AG04450 (cell line): ENCODE measurements at regions of chr9 and their contacts with region 1.

Region 1: GRCh38 chr9:36450110-36450732 is 50.2 kb upstream of the RNF38 start:
- DNase-seq: peak; percentile 18
- H3K4me3 ChIP-seq: no peak overlapping the region
- H3K27ac ChIP-seq: no peak overlapping the region
- H3K27me3 ChIP-seq: no peaks in the 10 kb centered on the region
- CTCF ChIP-seq: peak; percentile 78

Region 2: DNA sequence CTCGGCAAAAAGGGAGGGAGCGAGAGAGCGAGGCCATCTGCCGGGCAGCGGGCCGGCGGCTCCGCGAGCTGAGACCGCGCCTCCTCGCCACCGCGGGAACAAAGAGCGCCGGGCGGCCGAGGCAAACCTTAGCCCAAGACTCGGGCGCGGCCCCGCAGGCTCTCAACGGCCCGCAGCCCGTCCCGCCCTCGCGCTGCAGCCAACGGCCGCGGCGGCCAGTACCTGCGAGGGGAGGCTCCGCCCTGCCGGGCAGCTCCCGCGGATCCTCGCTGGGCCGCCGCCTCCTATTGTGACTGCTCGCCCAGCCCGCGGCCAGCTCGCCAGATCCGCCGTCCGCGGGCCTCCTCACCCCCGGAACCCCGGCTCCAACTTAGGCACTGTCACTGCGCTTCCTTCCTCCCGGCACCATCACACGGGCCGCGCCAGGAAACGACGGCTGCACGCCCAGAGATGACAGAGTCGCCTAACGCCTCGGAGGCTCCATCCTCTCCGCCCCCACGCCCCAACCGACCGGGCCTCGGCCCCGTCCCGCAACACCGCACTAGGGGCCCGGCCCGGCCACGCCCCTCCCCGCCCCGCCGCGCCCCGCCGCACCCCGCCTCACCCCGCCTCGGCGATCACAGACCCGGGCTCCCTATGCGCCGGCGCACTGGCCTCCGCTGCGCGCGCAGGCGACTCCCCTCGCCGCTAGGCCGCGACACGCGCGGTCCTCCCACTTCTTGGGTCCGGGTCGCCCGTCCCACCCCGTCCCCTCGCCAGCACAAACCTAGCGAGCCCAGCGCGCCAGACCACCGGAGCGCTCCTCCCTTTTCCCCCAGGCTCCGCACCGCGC is 49.7 kb before region 1 on chr9:
- CTCF ChIA-PET with region 1: interaction called, 189 read pairs
- POLR2A ChIA-PET with region 1: no interaction called
- DNase-seq: no peak
- H3K4me3 ChIP-seq: peak overlapping the region; percentile 79
- H3K27ac ChIP-seq: peak overlapping the region; percentile 75
- H3K27me3 ChIP-seq: no peaks in the 10 kb centered on the region
- CTCF ChIP-seq: no peak

Region 3: GRCh38 chr9:36436909-36437308 is 13.3 kb before region 1 on chr9:
- CTCF ChIA-PET with region 1: interaction called, 73 read pairs
- POLR2A ChIA-PET with region 1: no interaction called
- DNase-seq: no peak
- H3K4me3 ChIP-seq: no peak overlapping the region
- H3K27ac ChIP-seq: no peak overlapping the region
- H3K27me3 ChIP-seq: no peaks in the 10 kb centered on the region
- CTCF ChIP-seq: no peak

Region 4: DNA sequence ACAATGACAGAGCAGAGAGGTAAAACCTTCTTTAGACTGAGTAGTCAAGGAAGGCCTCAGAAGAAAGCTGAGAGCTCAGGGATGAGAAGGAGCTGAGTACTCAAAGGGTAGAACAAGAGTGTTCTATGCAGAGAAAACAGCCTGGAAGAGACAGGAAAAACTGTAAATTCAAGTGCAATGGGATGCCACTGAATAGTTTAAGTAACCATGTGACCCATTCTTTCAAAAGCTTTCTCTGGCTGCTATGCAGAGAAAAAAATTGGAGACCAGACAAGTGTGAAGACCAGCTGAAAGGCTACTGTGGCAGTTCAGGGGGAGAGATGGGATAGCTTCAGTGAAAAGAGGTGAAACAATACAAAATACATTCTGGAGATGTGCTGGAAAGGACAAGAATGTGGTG is 11.1 kb after region 1 on chr9:
- CTCF ChIA-PET with region 1: interaction called, 54 read pairs
- POLR2A ChIA-PET with region 1: no interaction called
- DNase-seq: peak; percentile 6
- H3K4me3 ChIP-seq: no peak overlapping the region
- H3K27ac ChIP-seq: no peak overlapping the region
- H3K27me3 ChIP-seq: no peaks in the 10 kb centered on the region
- CTCF ChIP-seq: no peak

Region 5: DNA sequence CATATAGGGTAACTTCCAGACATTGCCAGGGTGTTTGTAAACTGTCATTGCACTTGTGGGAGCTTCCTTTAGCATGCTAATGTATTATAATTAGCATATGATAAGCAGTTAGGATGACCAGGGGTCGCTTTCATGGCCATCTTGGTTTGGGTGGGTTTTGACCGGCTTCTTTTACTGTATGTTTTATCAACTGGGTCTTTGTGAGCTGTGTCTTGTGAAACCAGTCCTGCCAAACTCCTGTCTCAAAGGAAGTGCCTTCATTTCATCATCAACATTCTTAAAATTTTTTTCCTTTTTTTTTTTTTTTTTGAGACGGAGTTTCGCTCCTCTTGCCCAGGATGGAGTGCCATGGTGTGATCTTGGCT is 110.6 kb after region 1 on chr9:
- CTCF ChIA-PET with region 1: interaction called, 17 read pairs
- POLR2A ChIA-PET with region 1: interaction called, 5 read pairs
- DNase-seq: no peak
- H3K4me3 ChIP-seq: no peak overlapping the region
- H3K27ac ChIP-seq: no peak overlapping the region
- H3K27me3 ChIP-seq: no peaks in the 10 kb centered on the region
- CTCF ChIP-seq: no peak